ENCODE measurements at regions of chr12 and their contacts with region 1.

Region 1: GRCh38 chr12:45907955-45908354 is 82.4 kb downstream of the SCAF11 start:
- DNase-seq: no peak
- ATAC-seq: no peak
- H3K4me3 ChIP-seq: no peak overlapping the region
- H3K27ac ChIP-seq: no peak overlapping the region
- H3K4me1 ChIP-seq: no peaks in the 10 kb centered on the region
- H3K27me3 ChIP-seq: no peaks in the 10 kb centered on the region
- CTCF ChIP-seq: no peak

Region 2: DNA sequence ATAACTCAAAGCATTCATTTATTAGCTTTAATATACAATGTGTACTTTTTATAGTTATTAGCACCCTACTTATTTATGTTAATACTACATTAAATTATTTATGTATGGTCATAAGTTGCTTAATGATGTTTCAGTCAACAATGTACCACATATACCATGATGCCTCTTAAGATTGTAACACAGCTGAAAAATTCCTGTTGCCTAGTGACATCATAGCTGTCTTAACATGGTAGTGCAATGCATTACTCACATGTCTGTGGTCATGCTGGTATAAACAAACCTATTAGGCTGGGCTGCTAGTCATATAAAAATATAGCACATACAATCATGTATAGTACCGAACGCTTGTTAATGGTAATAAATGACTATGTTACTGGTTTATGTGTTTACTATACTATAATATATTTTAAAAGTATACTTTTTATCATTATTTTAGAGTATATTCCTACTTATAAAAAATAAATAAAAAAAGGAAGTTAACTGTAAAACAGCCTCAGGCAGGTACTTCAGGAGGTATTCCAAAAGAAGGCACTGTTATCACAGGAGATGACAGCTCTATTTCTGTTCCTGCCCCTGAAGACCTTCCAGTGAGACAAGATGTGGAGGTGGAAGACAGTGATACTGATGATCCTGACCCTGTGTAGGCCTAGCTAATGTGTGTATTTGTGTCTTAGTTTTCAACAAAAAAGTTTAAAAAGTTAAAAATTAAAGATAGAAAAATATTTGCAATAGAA is 571.5 kb before region 1 on chr12:
- CTCF ChIA-PET with region 1: no interaction called
- POLR2A ChIA-PET with region 1: no interaction called
- intact Hi-C with region 1: no loop called
- DNase-seq: peak; percentile 46
- ATAC-seq: peak; percentile 43; the same call in 1 of the 2 replicates
- H3K4me3 ChIP-seq: no peak overlapping the region
- H3K27ac ChIP-seq: no peak overlapping the region
- H3K4me1 ChIP-seq: peaks cover 5% of the 10 kb centered on the region; the same call in 1 of the 2 replicates
- H3K27me3 ChIP-seq: no peaks in the 10 kb centered on the region
- CTCF ChIP-seq: no peak

Region 3: GRCh38 chr12:45878630-45879255 is 29.2 kb before region 1 on chr12:
- CTCF ChIA-PET with region 1: no interaction called
- POLR2A ChIA-PET with region 1: no interaction called
- intact Hi-C with region 1: loop called (anchors 1 kb)
- DNase-seq: peak; percentile 25
- ATAC-seq: peak; percentile 68
- H3K4me3 ChIP-seq: no peak overlapping the region
- H3K27ac ChIP-seq: no peak overlapping the region
- H3K4me1 ChIP-seq: 0 out of 2 replicates have a peak, but pooled peaks cover 6% of the 10 kb centered on the region
- H3K27me3 ChIP-seq: no peaks in the 10 kb centered on the region
- CTCF ChIP-seq: no peak

Measured in PC-3 (cell line).